HEK293 (cell line): ENCODE measurements at regions of chr5 and their contacts with region 1.

Region 1: GRCh38 chr5:124628721-124629596 is 117.5 kb downstream of the ZNF608 start:
- H3K4me3 ChIP-seq: no peak overlapping the region
- H3K27ac ChIP-seq: peak overlapping the region; percentile 88
- H3K4me1 ChIP-seq: peaks cover 28% of the 10 kb centered on the region
- CTCF ChIP-seq: no peak

Region 2: DNA sequence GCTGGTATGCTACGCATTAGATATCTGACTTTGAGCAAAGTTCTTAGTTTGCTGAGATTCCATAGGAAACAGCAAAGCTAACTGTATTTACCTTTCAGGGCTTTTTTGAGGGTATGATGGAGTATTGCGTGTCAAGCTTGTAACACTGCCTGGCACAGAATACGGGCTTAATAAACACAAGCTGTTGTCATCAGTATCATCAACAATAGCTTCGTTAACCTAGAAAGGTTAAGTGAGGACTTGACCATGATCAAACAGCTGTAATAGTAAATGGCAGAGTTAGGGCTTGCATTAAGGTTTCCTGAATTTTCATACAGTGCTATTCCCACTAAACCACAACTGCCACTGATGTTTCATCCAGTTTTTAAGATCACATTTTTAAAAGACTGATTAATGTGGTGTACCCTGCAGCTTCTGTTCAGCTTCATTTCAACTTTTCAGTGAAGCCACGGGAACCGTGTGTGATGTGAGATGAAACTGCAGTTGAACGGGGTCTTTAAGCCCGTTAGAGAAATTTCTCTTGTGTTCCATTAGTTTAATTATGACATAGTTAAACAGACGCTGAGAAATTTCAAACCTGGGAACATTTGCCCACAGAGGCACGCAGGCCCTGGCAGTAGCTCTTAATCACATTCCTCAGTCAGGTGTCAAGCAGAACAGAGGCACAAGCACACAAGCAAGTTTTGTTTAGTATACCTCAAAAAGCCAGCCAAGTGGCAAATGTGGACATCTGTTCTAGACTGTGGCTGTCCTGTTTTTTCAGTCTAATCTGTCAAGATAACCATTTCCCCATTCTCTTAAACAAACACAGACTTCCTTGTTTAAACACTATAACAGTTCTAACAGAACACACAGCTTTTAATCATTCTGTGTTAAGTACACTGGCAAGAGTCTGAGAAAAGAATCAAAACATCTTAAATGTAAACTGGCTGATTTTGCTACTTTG is 29.7 kb before region 1 on chr5:
- CTCF ChIA-PET with region 1: no interaction called
- POLR2A ChIA-PET with region 1: interaction called, 22 read pairs
- H3K4me3 ChIP-seq: no peak overlapping the region
- H3K27ac ChIP-seq: peak overlapping the region; percentile 88
- H3K4me1 ChIP-seq: peaks cover 21% of the 10 kb centered on the region
- CTCF ChIP-seq: no peak

Region 3: GRCh38 chr5:124614105-124614504 is 14.9 kb before region 1 on chr5:
- CTCF ChIA-PET with region 1: no interaction called
- POLR2A ChIA-PET with region 1: no interaction called
- H3K4me3 ChIP-seq: no peak overlapping the region
- H3K27ac ChIP-seq: no peak overlapping the region
- H3K4me1 ChIP-seq: 0 out of 2 replicates have a peak, but pooled peaks cover 8% of the 10 kb centered on the region
- CTCF ChIP-seq: no peak

Region 4: DNA sequence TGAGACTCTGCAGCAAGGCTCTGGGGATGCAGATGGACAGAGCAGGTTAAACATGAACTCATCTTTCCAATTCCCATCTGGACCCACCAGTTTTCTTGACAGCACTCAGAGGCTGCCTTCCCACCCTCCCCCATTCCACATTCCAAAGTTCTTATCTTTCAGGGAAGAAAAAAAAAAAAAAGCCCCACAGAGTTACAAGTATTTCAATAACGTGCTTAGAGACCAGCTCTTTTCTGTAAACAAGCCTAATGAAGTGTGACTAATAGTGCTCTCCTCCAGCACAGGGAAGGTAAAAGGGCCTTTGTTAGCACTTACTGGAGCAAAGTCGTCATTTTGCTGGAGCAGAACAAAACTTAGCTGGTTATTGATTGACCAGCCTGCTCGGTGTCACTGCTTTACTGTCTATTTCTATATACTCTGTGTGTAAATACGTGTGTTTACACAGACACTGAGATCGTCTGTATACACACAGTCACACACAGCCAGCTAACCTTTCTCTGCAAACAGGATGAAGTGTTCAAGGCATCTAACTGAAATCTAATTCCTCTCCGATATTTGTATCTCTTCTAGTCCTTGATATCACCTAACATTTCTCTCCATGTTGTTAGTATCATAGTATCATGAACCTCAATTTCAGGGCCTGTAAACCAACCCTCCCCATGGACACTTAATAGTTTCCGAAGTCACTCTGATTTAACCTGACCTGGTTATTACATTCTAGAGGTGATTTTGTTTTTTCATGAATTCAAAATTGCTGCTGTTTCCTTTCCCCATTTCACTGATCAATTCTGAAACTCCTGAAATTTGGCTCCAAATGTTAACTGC is 32.6 kb after region 1 on chr5:
- CTCF ChIA-PET with region 1: no interaction called
- POLR2A ChIA-PET with region 1: interaction called, 17 read pairs
- H3K4me3 ChIP-seq: peak overlapping the region; percentile 10; the same call in 1 of the 2 replicates
- H3K27ac ChIP-seq: peak overlapping the region; percentile 95
- H3K4me1 ChIP-seq: peaks cover 71% of the 10 kb centered on the region
- CTCF ChIP-seq: no peak

Region 5: GRCh38 chr5:124683917-124684561 is 55.1 kb after region 1 on chr5:
- CTCF ChIA-PET with region 1: no interaction called
- POLR2A ChIA-PET with region 1: no interaction called
- H3K4me3 ChIP-seq: no peak overlapping the region
- H3K27ac ChIP-seq: no peak overlapping the region
- H3K4me1 ChIP-seq: peaks cover 30% of the 10 kb centered on the region
- CTCF ChIP-seq: no peak